GM12878 (cell line): ENCODE measurements at regions of chr15 and their contacts with region 1.

Region 1: DNA sequence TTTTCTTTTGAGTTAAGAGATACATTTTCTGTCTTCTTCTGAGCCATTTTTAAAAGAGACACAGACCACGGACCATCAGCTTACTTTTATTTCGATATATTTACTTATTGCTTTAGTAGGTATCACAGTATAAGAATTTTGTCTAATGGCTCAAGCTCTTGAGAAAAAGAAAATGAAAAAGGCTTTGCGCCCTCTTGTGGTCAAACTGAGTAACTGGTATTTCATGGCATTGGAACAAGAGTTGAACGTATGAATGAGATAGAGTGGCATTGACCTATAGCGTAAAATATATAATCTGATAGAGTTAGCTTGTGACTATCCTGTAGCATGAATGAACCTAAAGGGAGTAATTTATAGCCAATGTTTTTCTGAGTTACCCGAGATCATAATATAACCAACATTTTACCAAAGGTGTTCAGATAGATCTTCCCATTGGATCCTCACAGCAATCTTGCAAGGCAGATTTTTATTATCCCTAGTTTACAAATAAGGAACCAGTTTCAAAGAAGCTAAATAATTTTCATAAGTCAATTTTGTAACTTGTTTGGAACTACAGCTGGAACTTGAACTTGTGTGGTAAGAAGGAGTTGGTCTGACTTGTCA is 154.6 kb downstream of the POLR2M start:
- DNase-seq: peak; percentile 8
- ATAC-seq: peak; percentile 69
- H3K4me3 ChIP-seq: no peak overlapping the region
- H3K27ac ChIP-seq: no peak overlapping the region
- H3K4me1 ChIP-seq: no peaks in the 10 kb centered on the region
- H3K27me3 ChIP-seq: peaks cover 0 to 1% of the 10 kb centered on the region in 2 experiments; a peak in 1 of 4 replicates
- CTCF ChIP-seq: peak; percentile 63 to 75 (median 74)
- EP300 ChIP-seq: no peak
- POLR2A ChIP-seq: no peak
- RAD21 ChIP-seq: peak; percentile 59

Region 2: DNA sequence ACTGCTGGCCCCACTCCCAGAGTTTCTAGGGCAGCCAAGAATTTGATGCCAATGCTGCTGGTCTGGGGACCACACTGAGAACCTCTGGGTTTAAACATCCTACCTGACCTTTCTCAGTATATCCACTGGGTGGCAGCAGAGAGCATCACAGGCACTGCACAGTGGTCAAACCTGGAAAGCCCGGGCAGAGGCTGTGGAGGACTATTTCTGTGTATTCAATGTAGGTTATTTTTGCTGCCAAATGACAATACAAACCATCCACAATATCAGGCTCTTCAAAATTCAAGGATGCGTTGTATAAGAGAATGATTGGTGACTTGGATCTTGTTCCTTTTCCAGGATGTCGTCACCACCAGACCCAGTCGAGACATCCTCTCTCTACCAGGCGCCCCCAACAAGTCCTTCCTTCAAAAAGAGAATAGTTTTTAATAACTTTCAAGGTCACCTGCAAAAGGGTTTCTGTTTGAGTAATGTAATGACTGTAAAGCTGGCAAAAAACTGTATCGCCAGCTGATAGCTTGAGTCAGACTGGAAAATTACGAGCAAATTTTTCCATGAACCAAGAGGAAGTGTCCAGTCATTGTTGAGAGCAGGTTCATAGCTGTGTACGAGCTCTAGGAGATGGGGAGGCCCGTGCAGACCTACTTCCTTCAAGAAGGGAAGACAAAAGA is 300.0 kb before region 1 on chr15:
- CTCF ChIA-PET with region 1: interaction called, 34 read pairs
- POLR2A ChIA-PET with region 1: no interaction called
- RAD21 ChIA-PET with region 1: interaction called, 9 read pairs
- SMC1A ChIA-PET with region 1: interaction called, 5 read pairs
- in situ Hi-C with region 1: loop called (anchors 10 kb)
- intact Hi-C with region 1: loop called (anchors 1 kb)
- DNase-seq: peak; percentile 26
- ATAC-seq: peak; percentile 95
- H3K4me3 ChIP-seq: no peak overlapping the region
- H3K27ac ChIP-seq: no peak overlapping the region
- H3K4me1 ChIP-seq: peaks cover 3% of the 10 kb centered on the region; the same call in 1 of the 2 replicates
- H3K27me3 ChIP-seq: no peaks in the 10 kb centered on the region
- CTCF ChIP-seq: peak; percentile 82 to 86 (median 83)
- EP300 ChIP-seq: no peak
- POLR2A ChIP-seq: no peak
- RAD21 ChIP-seq: peak; percentile 66

Region 3: DNA sequence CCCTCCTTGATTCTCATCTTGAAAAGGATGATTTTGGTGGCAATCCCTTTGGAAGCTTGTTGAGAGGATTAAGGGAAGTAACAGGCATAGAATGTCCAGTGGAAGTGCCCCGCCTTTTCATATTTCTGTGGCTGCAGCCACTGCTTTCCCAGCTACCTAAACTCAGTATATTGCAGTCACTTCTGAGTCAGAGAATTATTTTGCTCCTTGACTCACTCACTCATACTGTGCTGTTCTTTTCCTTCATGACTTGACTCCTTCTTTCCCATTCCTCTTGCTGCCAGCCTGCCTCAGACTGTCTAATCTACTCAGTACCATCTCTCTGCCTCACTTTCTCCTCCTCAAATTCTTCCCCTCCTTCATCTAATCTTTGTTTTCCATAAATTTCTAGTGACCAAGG is 181.1 kb before region 1 on chr15:
- CTCF ChIA-PET with region 1: no interaction called
- POLR2A ChIA-PET with region 1: no interaction called
- RAD21 ChIA-PET with region 1: no interaction called
- SMC1A ChIA-PET with region 1: no interaction called
- in situ Hi-C with region 1: no loop called
- intact Hi-C with region 1: no loop called
- DNase-seq: no peak
- ATAC-seq: no peak
- H3K4me3 ChIP-seq: no peak overlapping the region
- H3K27ac ChIP-seq: no peak overlapping the region
- H3K4me1 ChIP-seq: no peaks in the 10 kb centered on the region
- H3K27me3 ChIP-seq: no peaks in the 10 kb centered on the region; a peak in 2 of 4 replicates
- CTCF ChIP-seq: no peak
- EP300 ChIP-seq: no peak
- POLR2A ChIP-seq: no peak
- RAD21 ChIP-seq: no peak

Region 4: DNA sequence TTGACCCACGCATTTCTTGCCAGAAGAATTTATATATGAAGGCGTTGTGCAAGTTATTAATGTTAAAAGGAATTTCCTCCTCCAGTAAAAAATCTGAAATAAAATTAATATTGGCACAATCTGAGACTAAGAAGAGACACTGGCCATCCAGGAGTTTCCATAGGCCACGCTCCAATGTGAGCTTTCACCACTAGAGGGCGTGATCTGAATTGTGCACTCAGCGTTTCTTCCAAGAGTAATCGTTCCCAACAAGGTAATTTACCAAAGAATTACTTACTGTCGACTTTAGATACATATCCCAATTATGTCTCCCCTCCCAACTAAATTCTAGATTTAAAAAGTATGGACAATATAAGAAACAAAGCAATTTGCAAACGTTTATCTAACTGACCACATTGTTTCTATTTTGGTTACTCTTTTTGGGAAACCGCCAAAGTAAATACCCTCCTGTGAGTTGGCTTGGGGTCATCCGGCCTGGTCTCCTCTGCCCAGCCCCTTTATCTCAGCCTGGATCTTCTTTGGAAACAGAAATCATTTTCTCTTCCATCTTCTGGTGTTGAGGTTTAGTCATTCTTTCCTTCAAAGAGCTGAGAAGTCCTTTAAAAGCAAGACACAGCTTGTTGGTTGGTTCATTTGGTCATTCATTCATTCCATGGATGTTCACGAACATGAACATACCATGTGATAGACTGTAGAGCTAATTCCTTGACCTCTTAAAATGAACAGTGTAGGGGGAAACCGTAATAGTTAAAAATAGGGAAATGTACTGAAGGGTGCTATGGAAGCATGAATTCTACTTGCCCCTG is 128.4 kb before region 1 on chr15:
- CTCF ChIA-PET with region 1: interaction called, 50 read pairs
- POLR2A ChIA-PET with region 1: no interaction called
- RAD21 ChIA-PET with region 1: interaction called, 6 read pairs
- SMC1A ChIA-PET with region 1: interaction called, 27 read pairs
- in situ Hi-C with region 1: no loop called
- intact Hi-C with region 1: loop called (anchors 5 kb)
- DNase-seq: no peak
- ATAC-seq: peak; percentile 82
- H3K4me3 ChIP-seq: no peak overlapping the region
- H3K27ac ChIP-seq: no peak overlapping the region
- H3K4me1 ChIP-seq: no peaks in the 10 kb centered on the region
- H3K27me3 ChIP-seq: no peaks in the 10 kb centered on the region
- CTCF ChIP-seq: peak; percentile 67 to 95 (median 85)
- EP300 ChIP-seq: no peak
- POLR2A ChIP-seq: no peak
- RAD21 ChIP-seq: peak; percentile 39; the same call in 1 of the 2 replicates

Region 5: GRCh38 chr15:57751177-57751800 is 109.8 kb before region 1 on chr15:
- CTCF ChIA-PET with region 1: interaction called, 70 read pairs
- POLR2A ChIA-PET with region 1: no interaction called
- RAD21 ChIA-PET with region 1: interaction called, 14 read pairs
- SMC1A ChIA-PET with region 1: interaction called, 34 read pairs
- in situ Hi-C with region 1: loop called (anchors 5 kb)
- intact Hi-C with region 1: loop called (anchors 1 kb)
- DNase-seq: no peak
- ATAC-seq: no peak
- H3K4me3 ChIP-seq: no peak overlapping the region
- H3K27ac ChIP-seq: no peak overlapping the region
- H3K4me1 ChIP-seq: no peaks in the 10 kb centered on the region
- H3K27me3 ChIP-seq: no peaks in the 10 kb centered on the region
- CTCF ChIP-seq: peak; percentile 35 to 47 (median 45); a peak in 5 of 6 replicates
- EP300 ChIP-seq: no peak
- POLR2A ChIP-seq: no peak
- RAD21 ChIP-seq: peak; percentile 62

Region 6: DNA sequence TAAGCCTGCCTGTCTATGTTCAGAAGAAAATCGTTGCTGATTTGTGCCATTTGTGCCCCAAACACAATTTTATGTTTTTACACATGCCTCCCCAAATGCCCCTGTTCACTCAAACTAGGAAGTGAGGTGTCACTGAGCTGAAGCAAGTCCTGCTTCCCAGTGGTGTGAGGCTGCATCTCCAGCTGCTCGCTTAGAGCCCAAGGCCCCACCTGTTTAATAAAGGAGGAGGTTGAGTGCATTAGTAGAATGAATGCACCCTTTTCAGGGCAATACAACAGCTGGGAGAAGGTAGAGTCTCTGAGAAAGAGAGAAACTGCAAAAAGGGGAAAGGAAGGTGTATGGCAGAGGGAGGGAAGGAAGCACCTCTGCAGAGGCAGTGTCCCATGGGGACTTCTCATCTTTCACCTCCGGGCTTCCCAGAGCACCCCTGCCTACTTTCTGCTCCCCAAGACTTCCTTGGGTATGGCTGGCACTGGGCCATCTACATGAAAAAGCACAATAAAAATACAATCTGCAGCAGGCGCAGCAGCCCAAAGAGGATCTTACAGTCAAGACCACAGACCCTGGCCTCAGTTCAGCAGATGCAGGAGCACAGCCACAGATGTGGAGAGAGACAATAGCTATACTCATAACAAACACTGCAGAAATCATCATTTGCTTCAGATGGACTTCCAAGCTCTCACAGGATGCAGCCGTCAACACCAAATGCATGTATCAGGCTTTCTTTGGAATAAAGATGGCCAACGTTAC is 11.3 kb after region 1 on chr15:
- CTCF ChIA-PET with region 1: interaction called, 30 read pairs
- POLR2A ChIA-PET with region 1: no interaction called
- RAD21 ChIA-PET with region 1: interaction called, 3 read pairs
- SMC1A ChIA-PET with region 1: interaction called, 4 read pairs
- in situ Hi-C with region 1: no loop called
- intact Hi-C with region 1: no loop called
- DNase-seq: no peak
- ATAC-seq: no peak
- H3K4me3 ChIP-seq: no peak overlapping the region
- H3K27ac ChIP-seq: no peak overlapping the region
- H3K4me1 ChIP-seq: no peaks in the 10 kb centered on the region
- H3K27me3 ChIP-seq: no peaks in the 10 kb centered on the region
- CTCF ChIP-seq: no peak
- EP300 ChIP-seq: no peak
- POLR2A ChIP-seq: no peak
- RAD21 ChIP-seq: no peak